ENCODE measurements at regions of chr5 and their contacts with region 1.

Region 1: GRCh38 chr5:95646554-95647431 is at the start of gene RFESD:
- DNase-seq: peak; percentile 86 to 96 (median 93)
- ATAC-seq: peak; percentile 93
- H3K4me3 ChIP-seq: peak within 1 kb of the TSS; percentile 67 to 77
- H3K4me3 Mint-ChIP-seq: peak within 1 kb of the TSS; percentile 91
- H3K27ac ChIP-seq: peak within 1 kb of the TSS; percentile 76 to 85
- H3K27ac Mint-ChIP-seq: peak within 1 kb of the TSS; percentile 94
- H3K4me1 ChIP-seq: peaks cover 20% of the 10 kb centered on the region
- H3K4me1 Mint-ChIP-seq: peaks cover 40% of the 10 kb centered on the region
- H3K27me3 ChIP-seq: no peaks in the 10 kb centered on the region
- H3K27me3 Mint-ChIP-seq: no peaks in the 10 kb centered on the region
- CTCF ChIP-seq: peak; percentile 22
- total RNA-seq, gene RFESD: 1.00 to 1.7 TPM

Region 2: GRCh38 chr5:95591490-95591901 is 55.3 kb before region 1 on chr5:
- CTCF ChIA-PET with region 1: no interaction called
- POLR2A ChIA-PET with region 1: no interaction called
- intact Hi-C with region 1: no loop called
- DNase-seq: no peak
- ATAC-seq: no peak
- H3K4me3 ChIP-seq: no peak overlapping the region
- H3K4me3 Mint-ChIP-seq: no peak overlapping the region
- H3K27ac ChIP-seq: no peak overlapping the region
- H3K27ac Mint-ChIP-seq: no peak overlapping the region
- H3K4me1 ChIP-seq: no peaks in the 10 kb centered on the region
- H3K4me1 Mint-ChIP-seq: peaks cover 10% of the 10 kb centered on the region
- H3K27me3 ChIP-seq: no peaks in the 10 kb centered on the region
- H3K27me3 Mint-ChIP-seq: no peaks in the 10 kb centered on the region
- CTCF ChIP-seq: no peak

Region 3: GRCh38 chr5:95620030-95620869 is 26.5 kb before region 1 on chr5 and contains the start of gene GPR150:
- CTCF ChIA-PET with region 1: interaction called, 26 read pairs
- POLR2A ChIA-PET with region 1: interaction called, 19 read pairs
- intact Hi-C with region 1: loop called (anchors 2 kb)
- DNase-seq: peak; percentile 32 to 80 (median 61)
- ATAC-seq: peak; percentile 69
- H3K4me3 ChIP-seq: peak within 1 kb of the TSS; percentile 65 to 74
- H3K4me3 Mint-ChIP-seq: peak within 1 kb of the TSS; percentile 89
- H3K27ac ChIP-seq: peak within 1 kb of the TSS in 1 of 2 experiments; percentile 22
- H3K27ac Mint-ChIP-seq: peak within 1 kb of the TSS; percentile 72
- H3K4me1 ChIP-seq: peaks cover 39% of the 10 kb centered on the region
- H3K4me1 Mint-ChIP-seq: peaks cover 46% of the 10 kb centered on the region
- H3K27me3 ChIP-seq: no peaks in the 10 kb centered on the region
- H3K27me3 Mint-ChIP-seq: no peaks in the 10 kb centered on the region
- CTCF ChIP-seq: no peak
- total RNA-seq, gene GPR150: 0.35 TPM in 1 of 2 experiments, not detected in the other

Region 4: DNA sequence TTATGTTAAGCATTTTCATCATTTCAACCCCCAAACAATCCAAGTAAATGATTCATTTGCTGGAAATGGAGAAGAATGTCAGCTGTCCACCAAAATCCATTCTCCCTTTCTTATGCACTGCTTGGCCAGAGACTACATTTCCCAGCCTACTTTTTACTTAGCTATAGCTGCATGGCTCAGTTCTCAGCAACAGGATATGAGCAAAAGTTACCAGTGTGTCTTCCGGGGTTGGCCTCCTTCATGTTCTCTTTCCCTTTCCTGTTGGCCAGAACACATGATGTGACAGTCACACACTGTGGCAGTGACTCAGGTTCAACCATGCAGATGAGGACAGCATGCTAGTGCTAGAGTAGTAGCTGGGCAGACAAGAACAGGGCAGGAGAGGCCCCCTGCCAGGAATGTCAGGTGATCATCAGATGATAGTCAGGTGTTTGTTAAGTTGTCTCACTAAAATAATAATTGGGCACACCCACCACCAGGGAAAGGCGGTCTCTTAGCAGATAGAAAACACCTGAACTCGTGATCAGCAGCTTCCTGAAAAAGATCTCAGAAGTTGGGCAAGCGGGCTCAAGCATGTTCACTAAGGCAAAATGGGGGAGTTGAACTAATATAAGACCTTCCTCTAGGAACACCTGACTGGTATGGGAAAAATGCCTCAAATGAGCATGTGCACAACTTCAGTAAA is 14.7 kb before region 1 on chr5:
- CTCF ChIA-PET with region 1: interaction called, 7 read pairs
- POLR2A ChIA-PET with region 1: interaction called, 16 read pairs
- intact Hi-C with region 1: loop called (anchors 1 kb)
- DNase-seq: peak; percentile 27 to 81 (median 64)
- ATAC-seq: peak; percentile 97
- H3K4me3 ChIP-seq: no peak overlapping the region
- H3K4me3 Mint-ChIP-seq: no peak overlapping the region
- H3K27ac ChIP-seq: peak overlapping the region; percentile 39 to 44
- H3K27ac Mint-ChIP-seq: peak overlapping the region; percentile 95
- H3K4me1 ChIP-seq: peaks cover 14% of the 10 kb centered on the region
- H3K4me1 Mint-ChIP-seq: peaks cover 15% of the 10 kb centered on the region
- H3K27me3 ChIP-seq: peaks cover 0 to 3% of the 10 kb centered on the region in 2 experiments
- H3K27me3 Mint-ChIP-seq: no peaks in the 10 kb centered on the region
- CTCF ChIP-seq: no peak

Region 5: DNA sequence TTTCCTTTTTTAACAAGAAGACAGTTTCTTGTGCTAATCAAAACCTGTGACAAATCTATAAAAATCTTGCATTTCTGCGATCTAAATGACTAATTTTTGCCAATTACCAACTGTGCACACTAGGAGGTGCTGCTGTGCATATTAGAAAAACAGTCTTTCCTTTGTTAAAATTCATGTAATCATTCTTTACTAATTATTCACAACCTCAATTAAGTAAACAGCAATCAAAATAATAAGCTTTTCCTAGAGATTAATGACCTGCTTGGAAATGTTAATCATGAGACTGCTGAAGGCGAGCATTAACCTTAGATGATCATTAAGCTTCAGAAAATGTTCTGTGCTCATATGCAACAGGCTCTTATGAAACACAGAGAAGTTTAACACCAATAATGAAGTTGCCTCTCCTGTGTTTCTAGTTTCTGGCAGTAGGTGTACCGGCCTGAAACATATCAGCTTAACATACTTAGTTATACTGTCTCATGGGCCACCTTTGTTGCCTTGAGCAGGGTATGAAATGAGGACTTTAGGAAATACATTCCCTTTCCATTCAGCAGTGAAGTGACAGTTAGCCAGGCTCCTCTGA is 17.5 kb after region 1 on chr5:
- CTCF ChIA-PET with region 1: interaction called, 14 read pairs
- POLR2A ChIA-PET with region 1: interaction called, 4 read pairs
- intact Hi-C with region 1: no loop called
- DNase-seq: peak in 4 of 9 experiments; percentile 29 to 55 (median 42)
- ATAC-seq: peak; percentile 54
- H3K4me3 ChIP-seq: no peak overlapping the region
- H3K4me3 Mint-ChIP-seq: no peak overlapping the region
- H3K27ac ChIP-seq: no peak overlapping the region
- H3K27ac Mint-ChIP-seq: no peak overlapping the region
- H3K4me1 ChIP-seq: no peaks in the 10 kb centered on the region
- H3K4me1 Mint-ChIP-seq: peaks cover 3% of the 10 kb centered on the region
- H3K27me3 ChIP-seq: no peaks in the 10 kb centered on the region
- H3K27me3 Mint-ChIP-seq: no peaks in the 10 kb centered on the region
- CTCF ChIP-seq: peak; percentile 94

Measured in CD8-positive, alpha-beta T cell (primary cell).